OCI-LY7 (cell line): ENCODE measurements at regions of chr12 and their contacts with region 1.

Region 1: GRCh38 chr12:12182703-12183365 is 84.0 kb downstream of the LRP6 start:
- DNase-seq: no peak
- H3K4me3 ChIP-seq: no peak overlapping the region
- H3K27ac ChIP-seq: no peak overlapping the region
- H3K4me1 ChIP-seq: no peaks in the 10 kb centered on the region
- CTCF ChIP-seq: no peak

Region 2: DNA sequence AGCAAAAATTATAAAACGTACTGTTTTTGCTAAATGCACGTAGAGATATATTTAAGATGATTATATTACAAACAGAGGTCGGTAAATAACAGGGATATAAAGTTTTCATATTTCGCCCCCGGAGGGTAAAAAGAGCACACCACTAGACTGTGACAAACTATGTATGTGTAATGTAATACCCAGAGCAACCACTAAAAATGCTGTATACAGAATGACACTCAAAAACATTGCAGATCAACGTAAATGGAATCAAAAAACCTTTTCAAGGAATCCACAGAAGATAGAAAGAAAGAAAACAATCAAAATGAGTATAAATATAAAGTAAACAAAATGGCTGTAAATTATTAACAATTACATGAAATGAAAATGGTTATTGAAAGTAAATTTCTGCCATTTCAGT is 835.0 kb before region 1 on chr12:
- CTCF ChIA-PET with region 1: no interaction called
- POLR2A ChIA-PET with region 1: no interaction called
- intact Hi-C with region 1: loop called (anchors 10 kb)
- DNase-seq: peak; percentile 5
- H3K4me3 ChIP-seq: no peak overlapping the region
- H3K27ac ChIP-seq: no peak overlapping the region
- H3K4me1 ChIP-seq: no peaks in the 10 kb centered on the region
- CTCF ChIP-seq: peak; percentile 63; the same call in 1 of the 2 replicates

Region 3: DNA sequence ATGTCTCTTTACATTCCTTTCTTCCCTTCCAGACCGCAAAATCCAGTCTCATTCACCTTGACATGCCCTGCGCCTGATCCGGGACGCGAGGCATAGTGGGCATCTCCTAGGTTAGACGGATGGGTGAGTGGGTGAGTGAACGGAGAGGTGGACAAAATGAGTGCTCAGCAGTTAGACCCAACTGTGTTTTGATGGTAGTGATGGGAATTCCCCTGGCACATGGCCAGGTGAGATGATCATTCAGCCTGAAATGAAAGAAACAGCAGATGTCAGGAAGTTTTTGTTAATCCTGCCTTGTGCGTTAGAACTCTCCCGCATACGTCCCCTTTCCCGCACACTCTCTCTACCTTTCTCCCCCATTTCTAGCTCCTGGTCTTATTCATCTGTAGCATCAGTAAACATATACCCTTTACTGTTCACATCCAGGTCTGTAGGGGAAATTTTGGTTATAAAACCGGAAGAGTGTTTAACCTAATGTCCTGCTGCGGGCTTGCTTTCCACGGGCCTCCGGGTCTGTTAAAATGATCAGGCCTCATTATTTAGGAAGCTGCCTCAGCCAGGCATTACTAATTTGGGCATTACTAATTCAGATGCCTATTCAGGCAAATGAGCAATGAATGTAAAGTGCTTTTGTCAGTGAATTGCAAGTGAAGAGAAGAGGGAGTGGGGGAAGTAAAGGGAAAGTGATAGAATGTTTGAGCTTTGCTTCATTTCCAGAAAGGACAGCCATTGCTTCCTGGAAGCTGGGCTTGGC is 360.6 kb before region 1 on chr12:
- CTCF ChIA-PET with region 1: no interaction called
- POLR2A ChIA-PET with region 1: no interaction called
- intact Hi-C with region 1: no loop called
- DNase-seq: peak; percentile 42
- H3K4me3 ChIP-seq: peak overlapping the region; percentile 39
- H3K27ac ChIP-seq: peak overlapping the region; percentile 54
- H3K4me1 ChIP-seq: peaks cover 61% of the 10 kb centered on the region
- CTCF ChIP-seq: no peak